ENCODE measurements at regions of chr2 and their contacts with region 1.

Region 1: GRCh38 chr2:41853427-41854216 is 194.2 kb upstream of the PKDCC start:
- DNase-seq: no peak
- ATAC-seq: no peak
- H3K4me3 Mint-ChIP-seq: no peak overlapping the region
- H3K27ac Mint-ChIP-seq: no peak overlapping the region
- H3K4me1 Mint-ChIP-seq: no peaks in the 10 kb centered on the region
- H3K27me3 Mint-ChIP-seq: peaks cover 14% of the 10 kb centered on the region

Region 2: GRCh38 chr2:41379496-41380221 is 474.0 kb before region 1 on chr2:
- CTCF ChIA-PET with region 1: no interaction called
- DNase-seq: no peak
- ATAC-seq: no peak
- H3K4me3 Mint-ChIP-seq: no peak overlapping the region
- H3K27ac Mint-ChIP-seq: no peak overlapping the region
- H3K4me1 Mint-ChIP-seq: no peaks in the 10 kb centered on the region
- H3K27me3 Mint-ChIP-seq: no peaks in the 10 kb centered on the region

Region 3: DNA sequence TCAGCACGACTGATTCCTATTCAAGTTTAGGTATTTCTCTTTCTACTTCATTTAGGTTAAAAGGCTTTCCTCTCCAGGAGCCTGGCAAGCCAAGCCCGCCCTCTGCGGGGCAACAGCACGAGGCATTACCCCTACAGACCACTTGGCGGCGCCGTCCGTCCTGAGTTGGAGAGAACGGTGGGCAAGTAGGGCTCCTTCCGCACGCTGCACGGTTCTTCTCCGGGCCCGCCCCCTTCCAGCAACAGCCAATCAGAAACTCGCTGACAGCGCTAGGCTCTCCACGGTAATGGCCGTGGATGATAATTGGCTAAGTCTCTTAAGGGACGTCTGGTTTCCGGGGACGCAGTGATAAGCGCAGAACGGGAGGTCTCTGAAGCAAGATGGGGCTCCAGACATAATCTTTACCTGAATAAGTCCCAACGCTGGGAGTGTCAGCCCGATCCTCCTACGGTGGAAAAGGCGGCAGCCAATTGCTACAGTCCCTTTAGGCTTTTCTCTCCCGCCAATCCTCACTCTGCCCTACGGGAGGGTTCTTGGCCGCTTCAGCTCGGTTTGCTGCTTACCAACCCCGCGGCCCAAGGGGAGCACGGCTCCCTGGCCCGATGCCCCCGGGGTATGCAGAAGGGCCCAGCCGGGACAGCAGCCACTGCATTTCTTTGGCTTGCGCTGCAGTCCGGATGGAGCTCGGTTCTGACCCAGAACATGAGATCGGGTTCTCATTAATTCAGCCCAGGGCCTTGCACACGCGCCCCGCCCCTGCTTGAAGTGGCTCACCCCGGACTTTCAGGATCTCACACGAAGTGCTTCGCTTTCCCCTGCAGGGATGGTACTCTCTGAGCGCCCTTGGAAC is 12.7 kb before region 1 on chr2:
- CTCF ChIA-PET with region 1: interaction called, 35 read pairs
- DNase-seq: peak; percentile 98
- ATAC-seq: peak; percentile 100
- H3K4me3 Mint-ChIP-seq: peak overlapping the region; percentile 80
- H3K27ac Mint-ChIP-seq: peak overlapping the region; percentile 86
- H3K4me1 Mint-ChIP-seq: peaks cover 10% of the 10 kb centered on the region
- H3K27me3 Mint-ChIP-seq: peaks cover 36% of the 10 kb centered on the region

Region 4: GRCh38 chr2:41879235-41879916 is 25.8 kb after region 1 on chr2:
- CTCF ChIA-PET with region 1: interaction called, 12 read pairs
- DNase-seq: no peak
- ATAC-seq: no peak
- H3K4me3 Mint-ChIP-seq: no peak overlapping the region
- H3K27ac Mint-ChIP-seq: no peak overlapping the region
- H3K4me1 Mint-ChIP-seq: no peaks in the 10 kb centered on the region
- H3K27me3 Mint-ChIP-seq: peaks cover 26% of the 10 kb centered on the region

Measured in activated CD8-positive, alpha-beta memory T cell treated with anti-CD3 and anti-CD28 coated beads, Interleukin-2, amount 10 ng/mL, durations not matched to agents 7 days and 5 days (primary cell).